Heart left ventricle (tissue), 16 donors: ENCODE measurements at regions of chr3 and their contacts with region 1.

Region 1: DNA sequence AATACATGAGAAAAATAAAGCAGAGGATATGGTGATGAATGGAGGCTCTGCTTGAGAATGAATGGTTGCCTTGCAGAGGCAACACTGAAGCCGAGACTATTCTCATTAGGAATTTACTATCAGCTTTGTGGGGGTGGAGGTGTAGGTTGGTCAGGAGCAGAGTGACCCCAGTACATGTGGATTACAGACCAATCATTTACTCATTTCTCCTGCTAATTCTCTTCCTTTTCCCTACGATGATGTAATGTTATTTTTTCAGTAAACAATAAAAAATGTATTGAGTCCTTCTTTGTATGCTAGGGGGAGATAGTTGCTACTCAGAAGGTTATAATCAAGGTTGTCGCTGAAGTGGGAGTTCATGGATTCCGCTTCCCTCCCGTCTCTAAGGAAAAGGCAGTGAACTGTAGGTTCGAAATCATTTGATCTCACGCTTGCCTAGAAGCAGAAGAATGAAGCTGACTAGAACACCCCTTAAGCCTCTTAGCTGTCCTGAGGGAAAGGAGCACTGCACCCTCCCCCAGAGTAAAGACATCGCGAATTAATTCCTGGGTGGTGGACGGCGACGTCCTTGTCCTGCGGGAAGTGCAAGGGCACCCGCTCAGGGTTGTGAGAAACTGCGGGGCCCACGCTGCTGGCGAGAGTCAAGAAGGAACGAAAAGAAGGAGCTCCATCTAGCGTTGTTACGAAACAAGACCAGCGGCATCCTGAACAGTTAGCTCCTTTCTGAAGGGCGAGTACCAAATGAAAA is 213.2 kb upstream of the PFN2 start:
- DNase-seq: peak; percentile 56 to 80 (median 67)
- ATAC-seq: peak; percentile 90 to 97 (median 95)
- H3K4me3 ChIP-seq: peak overlapping the region in 10 of 12 donors; percentile 29 to 52 (median 43)
- H3K27ac ChIP-seq: peak overlapping the region in 3 of 12 donors; percentile 8 to 43 (median 41)
- H3K4me1 ChIP-seq: peaks cover 0 to 14% (median 6%) of the 10 kb centered on the region in 12 donors
- H3K27me3 ChIP-seq: no peaks in the 10 kb centered on the region
- CTCF ChIP-seq: peak; percentile 50 to 84 (median 74)
- POLR2A ChIP-seq: no peak

Region 2: DNA sequence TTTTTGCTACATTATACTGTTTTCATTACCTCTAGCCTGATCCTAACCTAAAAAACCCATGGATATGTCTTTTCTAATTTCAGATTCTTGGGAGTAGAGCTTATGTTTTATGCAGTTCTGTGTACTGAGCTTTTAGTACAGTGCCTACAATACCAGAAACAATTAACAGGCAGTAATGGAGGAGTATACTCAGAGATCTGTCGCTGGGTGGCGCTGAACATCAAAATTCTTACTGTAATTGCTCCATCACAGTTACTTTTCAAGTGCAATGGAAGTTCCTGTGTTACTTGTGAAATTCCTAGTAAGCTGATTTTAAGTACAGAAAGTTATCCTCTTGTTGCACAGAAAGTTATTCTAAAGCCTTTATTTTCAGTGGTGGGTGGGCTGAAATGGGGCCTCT is 304.0 kb before region 1 on chr3:
- intact Hi-C with region 1: loop called in 3 of 10 experiments (anchors 5 to 10 kb)
- DNase-seq: peak in 4 of 5 donors; percentile 29 to 68 (median 58)
- ATAC-seq: peak; percentile 70 to 86 (median 80)
- H3K4me3 ChIP-seq: no peak overlapping the region
- H3K27ac ChIP-seq: no peak overlapping the region
- H3K4me1 ChIP-seq: peaks cover 0 to 15% (median 0%) of the 10 kb centered on the region in 12 donors
- H3K27me3 ChIP-seq: no peaks in the 10 kb centered on the region
- CTCF ChIP-seq: peak; percentile 37 to 67 (median 58)
- POLR2A ChIP-seq: no peak

Region 3: DNA sequence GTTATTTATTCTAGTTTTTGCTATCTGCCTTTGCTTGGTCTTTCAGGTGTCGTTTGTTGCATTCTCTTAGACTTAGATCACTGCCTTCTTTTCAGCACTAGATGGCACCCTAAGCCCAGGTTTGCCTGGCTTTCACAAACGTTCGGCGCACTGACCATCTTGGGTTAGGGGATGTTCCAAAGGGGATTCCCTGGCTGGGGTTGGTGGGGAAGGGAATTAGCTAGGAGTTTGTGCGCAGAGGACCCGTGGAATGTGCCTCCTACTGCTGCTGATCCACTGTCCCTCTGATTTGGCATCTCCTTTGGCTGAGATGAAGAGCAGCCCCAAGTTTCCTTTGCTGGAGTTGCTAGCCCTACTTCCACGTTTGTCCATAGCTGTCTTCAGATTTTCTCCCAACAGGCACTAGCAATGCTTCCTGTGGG is 247.0 kb before region 1 on chr3:
- intact Hi-C with region 1: loop called in 4 of 10 experiments (anchors 2 to 10 kb)
- DNase-seq: peak; percentile 32 to 58 (median 43)
- ATAC-seq: peak; percentile 32 to 81 (median 74)
- H3K4me3 ChIP-seq: peak overlapping the region in 1 of 12 donors; percentile 35
- H3K27ac ChIP-seq: no peak overlapping the region
- H3K4me1 ChIP-seq: peaks cover 0 to 26% (median 10%) of the 10 kb centered on the region in 12 donors
- H3K27me3 ChIP-seq: no peaks in the 10 kb centered on the region
- CTCF ChIP-seq: peak; percentile 51 to 82 (median 70)
- POLR2A ChIP-seq: no peak